Heart right ventricle (tissue), 16 donors: ENCODE measurements at regions of chr7 and their contacts with region 1.

Region 1: GRCh38 chr7:77326696-77327628 is 89.2 kb downstream of the GSAP start:
- DNase-seq: peak in 1 of 2 donors; percentile 29
- ATAC-seq: peak in 7 of 8 donors; percentile 23 to 88 (median 60)
- H3K4me3 ChIP-seq: no peak overlapping the region
- H3K27ac ChIP-seq: peak overlapping the region in 7 of 10 donors; percentile 2 to 85 (median 14)
- H3K4me1 ChIP-seq: peaks cover 11 to 54% (median 47%) of the 10 kb centered on the region in 9 donors
- H3K27me3 ChIP-seq: no peaks in the 10 kb centered on the region
- CTCF ChIP-seq: no peak

Region 2: GRCh38 chr7:77247206-77247850 is 79.6 kb before region 1 on chr7:
- intact Hi-C with region 1: loop called in 6 of 10 experiments (anchors 5 to 10 kb)
- DNase-seq: peak; percentile 61 to 74
- ATAC-seq: peak in 4 of 8 donors; percentile 47 to 66 (median 60)
- H3K4me3 ChIP-seq: no peak overlapping the region
- H3K27ac ChIP-seq: no peak overlapping the region
- H3K4me1 ChIP-seq: peaks cover 0 to 37% (median 15%) of the 10 kb centered on the region in 9 donors
- H3K27me3 ChIP-seq: no peaks in the 10 kb centered on the region
- CTCF ChIP-seq: peak; percentile 50 to 93 (median 80)

Region 3: GRCh38 chr7:77252506-77252905 is 74.5 kb before region 1 on chr7:
- intact Hi-C with region 1: loop called in 7 of 10 experiments (anchors 5 to 10 kb)
- DNase-seq: no peak
- ATAC-seq: peak in 2 of 8 donors; percentile 38 to 42
- H3K4me3 ChIP-seq: no peak overlapping the region
- H3K27ac ChIP-seq: no peak overlapping the region
- H3K4me1 ChIP-seq: peaks cover 0 to 6% (median 0%) of the 10 kb centered on the region in 9 donors
- H3K27me3 ChIP-seq: no peaks in the 10 kb centered on the region
- CTCF ChIP-seq: no peak